ENCODE measurements at regions of chr15 and their contacts with region 1.

Region 1: DNA sequence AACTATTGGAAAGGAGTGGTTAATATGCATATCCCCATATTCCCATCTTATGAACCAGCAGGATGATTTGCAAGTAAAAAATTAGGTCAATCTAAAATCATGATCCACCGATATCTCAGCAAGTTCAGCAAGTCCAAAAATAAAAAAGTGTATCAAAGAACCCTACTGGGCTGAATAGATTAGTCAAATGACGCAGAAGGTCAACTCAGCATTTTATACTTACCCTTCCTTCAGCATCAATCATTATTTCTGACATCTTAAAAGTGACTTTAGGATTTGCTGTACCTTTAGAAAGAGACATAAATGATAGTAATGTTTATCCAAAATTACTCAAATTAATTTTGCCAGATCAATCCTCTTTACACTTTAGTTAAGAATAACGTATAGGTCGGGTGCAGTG is 32.6 kb downstream of the DPP8 start:
- DNase-seq: no peak
- ATAC-seq: no peak
- H3K4me3 ChIP-seq: no peak overlapping the region
- H3K27ac ChIP-seq: no peak overlapping the region
- H3K4me1 ChIP-seq: no peaks in the 10 kb centered on the region
- CTCF ChIP-seq: no peak
- EP300 ChIP-seq: no peak
- POLR2A ChIP-seq: no peak
- RAD21 ChIP-seq: no peak

Region 2: GRCh38 chr15:65862682-65863081 is 377.8 kb after region 1 on chr15:
- CTCF ChIA-PET with region 1: no interaction called
- POLR2A ChIA-PET with region 1: interaction called, 10 read pairs
- DNase-seq: peak; percentile 82 to 92
- ATAC-seq: peak; percentile 97 to 99
- H3K4me3 ChIP-seq: no peak overlapping the region
- H3K27ac ChIP-seq: 0 out of 6 replicates have a peak overlapping the region, but pooled peaks of 1 of the 2 experiments have one; percentile 29
- H3K4me1 ChIP-seq: 0 out of 3 replicates have a peak, but pooled peaks cover 5% of the 10 kb centered on the region
- CTCF ChIP-seq: peak; percentile 51
- EP300 ChIP-seq: no peak
- POLR2A ChIP-seq: no peak
- RAD21 ChIP-seq: peak; percentile 26 to 32; a peak in 3 of 5 replicates